GM10248 (cell line): ENCODE measurements at regions of chr16 and their contacts with region 1.

Region 1: GRCh38 chr16:27235055-27235937 is 32.0 kb downstream of the KDM8 start:
- DNase-seq: peak; percentile 68
- CTCF ChIP-seq: peak; percentile 84

Region 2: DNA sequence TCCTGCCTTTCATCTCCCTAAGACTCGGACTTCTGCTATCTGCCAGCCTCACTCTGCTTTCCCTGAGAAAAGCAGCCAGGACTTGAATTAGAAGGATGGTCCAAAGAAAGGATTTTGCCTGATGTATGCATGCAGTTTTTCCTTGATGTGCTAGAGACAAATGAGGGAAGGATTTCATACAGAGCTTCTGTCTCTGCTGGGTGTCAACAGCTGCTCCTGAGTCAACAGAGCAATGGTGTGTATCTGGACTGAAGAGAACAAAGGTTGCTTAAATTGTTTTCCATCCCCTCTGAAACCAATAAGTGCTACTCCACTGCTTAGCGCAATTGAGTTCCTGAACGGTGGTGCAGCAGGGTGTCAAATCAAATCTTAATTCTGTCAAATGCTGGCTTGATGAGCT is 849.2 kb before region 1 on chr16:
- CTCF ChIA-PET with region 1: no interaction called
- POLR2A ChIA-PET with region 1: no interaction called
- DNase-seq: no peak
- CTCF ChIP-seq: no peak

Region 3: GRCh38 chr16:27203429-27204231 is 31.7 kb before region 1 on chr16 and contains the start of gene KDM8:
- CTCF ChIA-PET with region 1: interaction called, 31 read pairs
- POLR2A ChIA-PET with region 1: interaction called, 4 read pairs
- DNase-seq: peak; percentile 99
- CTCF ChIP-seq: no peak

Region 4: GRCh38 chr16:27268376-27269299 is 33.3 kb after region 1 on chr16 and contains the start of gene NSMCE1:
- CTCF ChIA-PET with region 1: interaction called, 44 read pairs
- POLR2A ChIA-PET with region 1: no interaction called
- DNase-seq: peak; percentile 97
- CTCF ChIP-seq: no peak

Region 5: GRCh38 chr16:27355610-27356009 is 120.3 kb after region 1 on chr16:
- CTCF ChIA-PET with region 1: interaction called, 21 read pairs
- POLR2A ChIA-PET with region 1: no interaction called
- DNase-seq: no peak
- CTCF ChIP-seq: peak; percentile 29

Region 6: DNA sequence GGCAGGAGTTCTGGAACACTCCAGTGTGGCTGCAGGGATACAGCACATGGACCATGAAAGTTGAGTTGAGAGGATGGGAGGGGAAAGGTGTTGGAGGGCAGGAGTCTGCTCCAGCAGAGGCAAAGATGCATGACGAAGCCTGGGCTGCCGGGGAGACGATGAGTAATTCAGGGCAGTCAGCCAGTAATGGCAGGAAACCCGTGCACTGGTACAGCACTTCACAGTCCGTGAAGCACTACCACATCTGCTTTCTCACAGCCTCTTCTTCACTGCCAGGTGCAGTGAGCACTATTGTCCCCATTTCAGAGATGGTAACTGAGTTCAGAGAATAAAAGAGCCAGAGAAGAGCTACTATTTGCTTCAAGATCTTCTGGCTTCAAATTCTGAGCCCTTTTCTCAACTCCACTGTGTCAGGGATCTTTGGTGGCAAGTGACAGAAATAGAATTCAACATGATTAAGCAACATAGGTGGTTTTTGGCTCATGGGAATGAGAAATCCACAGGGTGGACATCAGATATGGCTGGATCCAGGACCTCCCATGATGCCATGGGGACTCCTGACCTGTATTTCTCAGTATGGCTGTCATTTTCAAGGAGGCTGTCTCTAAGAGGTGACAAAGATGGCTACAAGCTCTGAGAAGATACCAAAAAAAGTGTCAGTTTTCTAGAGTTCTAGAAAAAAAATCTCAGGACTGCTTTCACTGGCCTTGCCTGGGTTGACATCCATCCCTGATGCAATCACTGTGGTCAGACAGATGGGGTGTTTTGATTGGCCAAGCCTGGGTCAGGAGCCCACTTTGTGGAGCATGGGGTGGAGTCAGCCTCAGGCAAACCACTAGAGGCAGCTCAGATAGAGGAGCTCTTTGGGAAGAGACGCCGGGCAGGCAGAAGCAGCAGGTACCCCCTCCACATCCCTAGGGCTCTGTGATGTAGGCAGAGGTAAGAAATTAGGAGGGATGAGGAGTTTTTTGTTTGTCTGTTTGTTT is 191.4 kb after region 1 on chr16:
- CTCF ChIA-PET with region 1: interaction called, 10 read pairs
- POLR2A ChIA-PET with region 1: no interaction called
- DNase-seq: peak; percentile 81
- CTCF ChIP-seq: no peak

Region 7: GRCh38 chr16:27690608-27691007 is 455.3 kb after region 1 on chr16:
- CTCF ChIA-PET with region 1: no interaction called
- POLR2A ChIA-PET with region 1: no interaction called
- DNase-seq: peak; percentile 36
- CTCF ChIP-seq: peak; percentile 45